Right ventricle myocardium superior (tissue), 1 donor: ENCODE measurements at regions of chr5 and their contacts with region 1.

Region 1: DNA sequence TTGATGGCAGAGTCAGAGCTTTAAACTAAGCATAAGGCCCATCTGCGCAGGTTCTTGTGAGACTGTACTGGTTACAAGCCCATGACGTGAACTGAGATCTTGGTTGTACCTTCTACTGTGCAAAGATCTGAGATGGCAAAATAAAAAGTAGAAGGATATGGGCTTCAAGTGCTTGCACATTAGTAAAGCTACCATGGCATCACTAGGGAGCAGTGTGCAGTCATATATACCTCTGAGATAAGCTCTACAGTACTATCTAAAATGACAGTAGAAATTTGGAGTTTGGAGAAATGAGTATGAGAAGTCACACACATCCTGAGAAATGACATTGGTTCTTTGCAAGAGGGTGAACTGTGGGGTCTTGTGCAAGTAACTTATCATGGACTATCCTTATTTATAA is 408.2 kb upstream of the PRR16 start:
- DNase-seq: no peak
- ATAC-seq: peak; percentile 62

Region 2: GRCh38 chr5:120457839-120458507 is 402.1 kb after region 1 on chr5:
- intact Hi-C with region 1: loop called (anchors 5 kb)
- DNase-seq: peak; percentile 90
- ATAC-seq: peak; percentile 78